ENCODE measurements at regions of chr12 and their contacts with region 1.

Region 1: GRCh38 chr12:108838194-108839017 is 19.0 kb downstream of the SSH1 start:
- DNase-seq: peak in 6 of 10 donors; percentile 10 to 65 (median 32)
- ATAC-seq: peak; percentile 75 to 89
- H3K4me3 Mint-ChIP-seq: peak overlapping the region; percentile 34 to 79 (median 60)
- H3K27ac Mint-ChIP-seq: peak overlapping the region; percentile 16 to 96 (median 84)
- H3K4me1 Mint-ChIP-seq: peaks cover 16 to 42% (median 35%) of the 10 kb centered on the region in 4 donors
- H3K27me3 Mint-ChIP-seq: no peaks in the 10 kb centered on the region

Region 2: DNA sequence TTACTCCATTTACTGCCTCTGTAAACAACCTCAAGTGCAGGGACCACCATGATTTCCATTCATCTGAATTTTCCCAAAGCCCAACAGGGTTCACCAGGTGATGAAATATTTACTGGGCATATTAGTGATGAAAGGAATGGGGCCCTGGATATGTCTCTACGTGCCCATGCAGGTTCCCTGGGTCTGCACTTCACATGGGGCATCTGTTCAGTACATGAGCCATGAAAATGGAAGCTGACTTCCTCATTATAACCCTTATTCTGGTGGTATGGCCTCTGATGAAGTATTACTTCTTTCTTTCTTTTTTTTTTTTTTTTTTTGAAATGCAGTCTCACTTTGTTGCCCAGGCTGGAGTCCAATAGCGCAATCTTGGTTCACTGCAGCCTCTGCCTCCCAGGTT is 80.5 kb before region 1 on chr12:
- POLR2A ChIA-PET with region 1: no interaction called
- DNase-seq: no peak
- ATAC-seq: no peak
- H3K4me3 Mint-ChIP-seq: no peak overlapping the region
- H3K27ac Mint-ChIP-seq: no peak overlapping the region
- H3K4me1 Mint-ChIP-seq: no peaks in the 10 kb centered on the region
- H3K27me3 Mint-ChIP-seq: no peaks in the 10 kb centered on the region

Region 3: GRCh38 chr12:108856428-108857157 is 18.2 kb after region 1 on chr12:
- POLR2A ChIA-PET with region 1: interaction called, 15 read pairs
- DNase-seq: peak; percentile 34 to 71 (median 57)
- ATAC-seq: peak; percentile 40 to 68
- H3K4me3 Mint-ChIP-seq: peak overlapping the region; percentile 83 to 97 (median 96)
- H3K27ac Mint-ChIP-seq: peak overlapping the region; percentile 88 to 98 (median 96)
- H3K4me1 Mint-ChIP-seq: peaks cover 20 to 64% (median 40%) of the 10 kb centered on the region in 4 donors
- H3K27me3 Mint-ChIP-seq: peaks cover 0 to 2% (median 0%) of the 10 kb centered on the region in 5 donors